Activated CD4-positive, alpha-beta memory T cell treated with anti-CD3 and anti-CD28 coated beads, Interleukin-2, amount 10 ng/mL, durations not matched to agents 7 days and 5 days (primary cell): ENCODE measurements at regions of chr12 and their contacts with region 1.

Region 1: GRCh38 chr12:69157023-69157655 is 82.2 kb upstream of the CPSF6 start:
- DNase-seq: peak; percentile 92
- H3K4me3 Mint-ChIP-seq: peak overlapping the region; percentile 34
- H3K27ac Mint-ChIP-seq: peak overlapping the region; percentile 44
- H3K4me1 Mint-ChIP-seq: peaks cover 43% of the 10 kb centered on the region
- H3K27me3 Mint-ChIP-seq: no peaks in the 10 kb centered on the region

Region 2: GRCh38 chr12:68915055-68915454 is 242.1 kb before region 1 on chr12:
- CTCF ChIA-PET with region 1: no interaction called
- POLR2A ChIA-PET with region 1: no interaction called
- DNase-seq: no peak
- H3K4me3 Mint-ChIP-seq: no peak overlapping the region
- H3K27ac Mint-ChIP-seq: no peak overlapping the region
- H3K4me1 Mint-ChIP-seq: peaks cover 9% of the 10 kb centered on the region
- H3K27me3 Mint-ChIP-seq: no peaks in the 10 kb centered on the region

Region 3: GRCh38 chr12:69141074-69141473 is 16.1 kb before region 1 on chr12:
- CTCF ChIA-PET with region 1: interaction called, 12 read pairs
- POLR2A ChIA-PET with region 1: no interaction called
- DNase-seq: no peak
- H3K4me3 Mint-ChIP-seq: no peak overlapping the region
- H3K27ac Mint-ChIP-seq: no peak overlapping the region
- H3K4me1 Mint-ChIP-seq: no peaks in the 10 kb centered on the region
- H3K27me3 Mint-ChIP-seq: no peaks in the 10 kb centered on the region

Region 4: GRCh38 chr12:69239352-69239921 is 82.3 kb after region 1 on chr12 and contains the start of gene CPSF6:
- CTCF ChIA-PET with region 1: interaction called, 33 read pairs
- POLR2A ChIA-PET with region 1: interaction called, 4 read pairs
- DNase-seq: peak; percentile 97
- H3K4me3 Mint-ChIP-seq: peak within 1 kb of the TSS; percentile 100
- H3K27ac Mint-ChIP-seq: peak within 1 kb of the TSS; percentile 98
- H3K4me1 Mint-ChIP-seq: peaks cover 45% of the 10 kb centered on the region
- H3K27me3 Mint-ChIP-seq: no peaks in the 10 kb centered on the region
- total RNA-seq, gene CPSF6: 89.9 to 91.6 TPM

Region 5: DNA sequence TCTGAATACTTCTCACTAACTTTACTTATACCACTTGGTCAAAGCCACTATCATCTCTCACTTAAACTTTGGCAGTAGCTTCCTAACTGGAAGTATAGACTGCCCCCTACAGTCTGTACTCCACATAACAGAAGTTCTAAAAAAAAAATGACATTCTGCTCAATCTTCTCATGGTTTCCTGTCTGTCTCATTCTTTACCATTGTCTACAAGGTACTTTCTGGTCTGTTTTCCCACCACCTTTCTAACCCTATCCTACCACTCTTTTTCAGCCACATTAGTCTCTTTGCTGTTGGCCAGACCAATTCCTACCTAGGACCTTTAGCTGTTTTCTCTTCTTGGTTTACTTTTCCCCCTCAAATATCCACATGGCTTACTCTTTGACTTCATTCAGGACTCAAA is 96.9 kb after region 1 on chr12:
- CTCF ChIA-PET with region 1: interaction called, 76 read pairs
- POLR2A ChIA-PET with region 1: interaction called, 7 read pairs
- DNase-seq: no peak
- H3K4me3 Mint-ChIP-seq: no peak overlapping the region
- H3K27ac Mint-ChIP-seq: peak overlapping the region; percentile 48
- H3K4me1 Mint-ChIP-seq: peaks cover 31% of the 10 kb centered on the region
- H3K27me3 Mint-ChIP-seq: no peaks in the 10 kb centered on the region

Region 6: DNA sequence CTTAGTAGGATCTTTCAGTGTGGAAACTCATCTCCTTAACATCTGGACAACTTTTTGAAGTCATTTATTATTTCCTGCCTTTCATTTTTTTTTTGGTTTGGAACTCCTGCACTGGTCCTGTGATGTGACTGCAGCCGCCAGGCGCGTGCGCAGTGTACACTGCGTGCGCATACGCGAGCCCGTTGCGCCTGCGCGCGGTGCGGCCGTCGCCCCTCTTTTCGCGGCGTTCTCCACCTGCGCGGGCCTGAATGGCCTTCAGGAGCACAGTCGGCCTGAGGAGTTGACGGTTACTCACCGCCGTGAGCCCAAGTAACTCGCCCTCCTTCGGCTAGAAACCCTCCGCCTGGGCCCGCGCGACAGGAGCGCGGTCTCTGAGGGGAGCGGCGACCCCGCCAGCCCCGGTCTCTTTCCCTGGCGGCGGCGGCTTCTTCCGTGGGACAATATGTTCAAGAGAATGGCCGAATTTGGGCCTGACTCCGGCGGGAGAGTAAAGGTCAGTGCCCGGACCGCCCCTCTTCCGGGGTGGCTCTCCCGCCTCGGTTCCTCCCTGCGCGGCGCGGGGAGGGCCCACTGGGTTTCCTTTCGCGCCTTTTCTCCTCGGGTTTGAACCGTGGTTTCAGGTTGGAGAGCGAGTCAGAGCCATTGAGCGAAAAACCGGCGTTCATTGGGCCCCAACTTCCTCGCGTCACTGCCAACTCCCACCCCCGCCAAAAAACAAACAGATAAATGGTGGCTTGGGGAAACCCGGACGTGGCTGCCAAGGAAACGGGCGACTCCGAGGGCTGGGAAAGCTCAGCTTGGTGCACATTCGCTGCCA is 202.6 kb after region 1 on chr12 and contains the start of gene YEATS4:
- CTCF ChIA-PET with region 1: interaction called, 11 read pairs
- POLR2A ChIA-PET with region 1: no interaction called
- DNase-seq: peak; percentile 91
- H3K4me3 Mint-ChIP-seq: peak within 1 kb of the TSS; percentile 92
- H3K27ac Mint-ChIP-seq: peak within 1 kb of the TSS; percentile 89
- H3K4me1 Mint-ChIP-seq: peaks cover 36% of the 10 kb centered on the region
- H3K27me3 Mint-ChIP-seq: peaks cover 3% of the 10 kb centered on the region
- total RNA-seq, gene YEATS4: 43.0 to 45.0 TPM